Lower leg skin (tissue), 4 donors: ENCODE measurements at regions of chr20 and their contacts with region 1.

Region 1: DNA sequence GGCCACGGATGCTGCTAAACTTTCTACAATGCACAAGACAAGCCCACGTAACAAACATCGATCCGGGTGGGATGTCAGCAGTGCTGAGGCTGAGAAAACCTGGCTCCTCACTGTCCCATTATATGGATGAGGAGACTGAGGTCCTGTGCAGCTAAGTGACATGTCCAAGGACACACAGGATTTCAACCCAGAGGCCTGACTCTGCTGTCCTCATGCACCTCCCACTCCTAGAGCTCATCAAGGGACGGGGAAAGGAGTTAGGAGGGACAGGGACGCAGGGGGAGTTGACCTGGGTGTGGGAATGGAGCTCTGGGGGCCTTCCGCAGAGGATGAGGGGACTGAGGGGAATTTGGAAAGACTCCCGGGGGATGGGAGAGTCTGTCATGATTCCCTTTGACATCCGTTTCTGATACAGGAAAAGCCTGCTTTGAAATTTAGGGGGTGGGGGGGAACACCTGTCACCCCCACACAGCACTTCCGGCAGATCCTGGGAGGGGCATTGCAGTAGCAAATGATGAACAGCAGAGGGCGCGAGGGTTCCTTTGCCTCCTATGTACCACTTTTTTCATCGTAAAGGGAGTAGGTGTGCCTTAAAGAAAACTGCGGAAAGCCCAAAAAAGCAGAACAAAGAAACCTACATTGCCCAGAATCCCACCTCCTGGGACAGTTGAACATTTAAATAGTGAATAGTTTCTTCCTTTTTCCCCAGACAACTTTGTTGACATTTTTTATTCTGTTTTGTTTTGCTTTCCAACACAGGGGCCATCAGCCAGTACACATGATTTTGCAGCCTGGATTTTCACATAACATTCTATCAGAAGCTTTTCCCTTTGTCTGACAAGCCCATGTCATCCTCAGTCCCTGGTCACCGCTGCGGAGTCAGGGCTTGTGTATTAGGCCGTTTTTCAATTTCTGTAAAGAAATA is 48.6 kb downstream of the SLC2A10 start:
- DNase-seq: peak; percentile 30 to 90
- H3K4me3 ChIP-seq: no peak overlapping the region
- CTCF ChIP-seq: peak in 1 of 3 donors; percentile 74
- POLR2A ChIP-seq: no peak

Region 2: DNA sequence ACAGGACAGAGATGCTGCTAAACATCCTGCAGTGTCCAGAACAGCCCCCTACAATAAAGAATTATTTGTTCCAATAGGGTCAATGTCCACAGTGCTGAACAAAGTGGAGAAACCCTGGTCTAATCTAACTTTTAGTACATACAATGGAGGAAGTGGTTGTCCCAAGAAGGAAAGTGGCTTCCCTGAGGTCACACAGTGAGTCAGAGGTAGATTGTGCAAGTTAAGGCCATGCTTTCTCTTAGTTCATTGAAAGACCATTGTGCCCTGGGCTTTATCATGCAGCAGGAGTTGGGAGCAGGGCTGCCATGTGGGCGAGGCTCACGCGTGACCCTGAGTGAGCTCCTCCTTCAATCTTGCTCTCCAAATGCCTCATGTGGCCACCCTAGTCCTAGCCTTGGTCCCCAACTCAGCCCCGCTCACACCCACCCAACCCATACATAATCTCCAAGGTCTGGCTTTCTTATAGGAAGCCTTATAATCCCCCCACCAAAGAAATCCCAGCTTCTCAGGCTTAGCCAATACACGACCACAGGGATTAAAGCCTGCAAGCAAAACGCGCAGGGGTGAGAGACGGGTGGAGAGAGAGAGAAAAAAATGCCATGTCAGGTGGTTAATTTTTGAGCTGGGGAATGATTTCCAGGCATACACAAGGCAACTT is 126.7 kb before region 1 on chr20:
- intact Hi-C with region 1: no loop called
- DNase-seq: peak; percentile 17 to 59
- H3K4me3 ChIP-seq: no peak overlapping the region
- CTCF ChIP-seq: no peak
- POLR2A ChIP-seq: no peak

Region 3: GRCh38 chr20:47241345-47241781 is 483.3 kb after region 1 on chr20:
- intact Hi-C with region 1: loop called (anchors 10 kb)
- DNase-seq: no peak
- H3K4me3 ChIP-seq: no peak overlapping the region
- CTCF ChIP-seq: no peak
- POLR2A ChIP-seq: no peak